Activated T-helper 2 cell treated with anti-CD3 and anti-CD28 coated beads, Interferon-gamma antibody, Interleukin-2, Interleukin-4, amounts not matched to agents 10 μg/mL and 5 μg/mL and 100 μg/mL, durations not matched to agents 14 hours and 24 hours and 36 hours (primary cell): ENCODE measurements at regions of chr4 and their contacts with region 1.

Region 1: DNA sequence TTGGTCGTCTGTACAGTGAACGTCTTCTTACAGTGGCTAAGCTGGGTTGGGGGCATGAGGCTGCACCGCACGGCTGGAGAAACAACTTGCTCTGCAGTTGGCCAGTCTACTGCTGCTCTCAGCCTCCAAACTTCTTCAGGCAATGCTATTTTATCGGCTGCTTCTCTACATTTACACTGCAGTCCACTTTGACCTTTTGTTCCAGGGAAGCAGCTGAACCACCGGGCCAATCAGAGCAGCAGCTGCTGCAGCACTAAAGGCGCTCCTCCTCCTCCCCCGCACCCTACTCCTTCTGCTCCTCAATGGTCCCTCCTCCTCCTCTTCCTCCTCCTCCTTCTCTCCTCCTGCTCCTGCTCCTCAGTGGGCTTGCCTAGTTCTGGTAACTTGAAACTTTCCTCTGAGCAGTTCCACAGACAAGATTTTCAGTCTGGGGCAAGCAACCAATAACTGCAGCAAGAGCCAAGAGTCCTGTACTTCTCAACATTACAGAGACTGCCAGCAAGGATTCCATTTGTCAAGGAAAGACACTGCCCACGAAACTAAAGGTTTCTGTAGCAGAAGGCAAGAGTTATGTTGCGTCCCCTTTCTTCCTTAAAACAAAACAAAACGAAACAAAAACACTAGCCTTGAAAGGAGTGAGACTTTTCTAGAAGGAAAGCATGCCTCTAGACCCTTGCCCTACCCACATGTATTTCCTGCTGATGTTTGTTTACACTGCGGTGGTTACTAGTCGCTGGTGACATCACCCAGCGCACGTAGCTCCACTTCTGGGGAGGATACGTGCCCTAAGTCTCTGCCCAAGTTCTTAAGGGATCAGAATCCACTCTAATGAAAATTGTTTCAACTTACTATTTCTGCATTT is 125.7 kb upstream of the NAP1L5 start:
- DNase-seq: peak; percentile 71
- H3K4me3 Mint-ChIP-seq: peak overlapping the region; percentile 91
- H3K27ac Mint-ChIP-seq: peak overlapping the region; percentile 97
- H3K4me1 Mint-ChIP-seq: peaks cover 41% of the 10 kb centered on the region
- H3K27me3 Mint-ChIP-seq: peaks cover 1% of the 10 kb centered on the region

Region 2: GRCh38 chr4:88792268-88792781 is 31.0 kb before region 1 on chr4:
- intact Hi-C with region 1: loop called (anchors 2 kb)
- DNase-seq: no peak
- H3K4me3 Mint-ChIP-seq: no peak overlapping the region
- H3K27ac Mint-ChIP-seq: peak overlapping the region; percentile 47
- H3K4me1 Mint-ChIP-seq: peaks cover 7% of the 10 kb centered on the region
- H3K27me3 Mint-ChIP-seq: peaks cover 16% of the 10 kb centered on the region

Region 3: GRCh38 chr4:88803600-88804096 is 19.6 kb before region 1 on chr4:
- intact Hi-C with region 1: loop called (anchors 2 kb)
- DNase-seq: no peak
- H3K4me3 Mint-ChIP-seq: no peak overlapping the region
- H3K27ac Mint-ChIP-seq: no peak overlapping the region
- H3K4me1 Mint-ChIP-seq: peaks cover 10% of the 10 kb centered on the region
- H3K27me3 Mint-ChIP-seq: peaks cover 38% of the 10 kb centered on the region

Region 4: DNA sequence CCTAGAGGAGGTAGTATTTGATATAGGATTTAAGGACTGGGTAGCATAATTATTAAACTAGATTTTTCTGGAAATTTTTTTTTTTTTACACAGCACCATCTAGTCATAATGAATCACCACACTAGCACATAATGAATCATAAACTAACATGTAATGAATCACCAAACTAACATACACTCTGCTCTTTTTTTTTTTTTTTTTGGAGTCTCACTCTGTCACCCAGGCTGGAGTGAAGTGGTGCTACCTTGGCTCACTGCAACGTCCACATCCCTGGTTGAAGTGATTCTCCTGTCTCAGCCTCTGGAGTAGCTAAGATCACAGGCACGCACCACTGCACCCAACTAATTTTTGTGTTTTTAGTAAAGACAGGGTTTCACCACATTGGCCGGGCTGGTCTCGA is 141.2 kb after region 1 on chr4:
- intact Hi-C with region 1: loop called (anchors 10 kb)
- DNase-seq: no peak
- H3K4me3 Mint-ChIP-seq: no peak overlapping the region
- H3K27ac Mint-ChIP-seq: no peak overlapping the region
- H3K4me1 Mint-ChIP-seq: peaks cover 5% of the 10 kb centered on the region
- H3K27me3 Mint-ChIP-seq: no peaks in the 10 kb centered on the region

Region 5: GRCh38 chr4:89024051-89024675 is 200.9 kb after region 1 on chr4:
- intact Hi-C with region 1: loop called (anchors 1 kb)
- DNase-seq: peak; percentile 14
- H3K4me3 Mint-ChIP-seq: no peak overlapping the region
- H3K27ac Mint-ChIP-seq: no peak overlapping the region
- H3K4me1 Mint-ChIP-seq: no peaks in the 10 kb centered on the region
- H3K27me3 Mint-ChIP-seq: peaks cover 2% of the 10 kb centered on the region

Region 6: GRCh38 chr4:89110986-89111832 is 287.9 kb after region 1 on chr4 and contains the start of gene TIGD2:
- intact Hi-C with region 1: loop called (anchors 1 kb)
- DNase-seq: peak; percentile 80
- H3K4me3 Mint-ChIP-seq: peak within 1 kb of the TSS; percentile 84
- H3K27ac Mint-ChIP-seq: peak within 1 kb of the TSS; percentile 42
- H3K4me1 Mint-ChIP-seq: peaks cover 17% of the 10 kb centered on the region
- H3K27me3 Mint-ChIP-seq: peaks cover 22% of the 10 kb centered on the region
- total RNA-seq, gene TIGD2: 2.6 and 3.0 TPM in 2 replicates

Region 7: GRCh38 chr4:89528526-89529133 is 705.3 kb after region 1 on chr4:
- intact Hi-C with region 1: no loop called
- DNase-seq: peak; percentile 10
- H3K4me3 Mint-ChIP-seq: no peak overlapping the region
- H3K27ac Mint-ChIP-seq: no peak overlapping the region
- H3K4me1 Mint-ChIP-seq: peaks cover 8% of the 10 kb centered on the region
- H3K27me3 Mint-ChIP-seq: peaks cover 37% of the 10 kb centered on the region